Activated CD4-positive, alpha-beta memory T cell treated with anti-CD3 and anti-CD28 coated beads for 36 hours (primary cell): ENCODE measurements at regions of chr3 and their contacts with region 1.

Region 1: GRCh38 chr3:122679085-122679881 is 1.4 kb upstream of the PARP14 start:
- DNase-seq: peak; percentile 90
- H3K4me3 Mint-ChIP-seq: peak overlapping the region; percentile 99
- H3K27ac Mint-ChIP-seq: peak overlapping the region; percentile 96
- H3K4me1 Mint-ChIP-seq: peaks cover 51% of the 10 kb centered on the region
- H3K27me3 Mint-ChIP-seq: no peaks in the 10 kb centered on the region

Region 2: DNA sequence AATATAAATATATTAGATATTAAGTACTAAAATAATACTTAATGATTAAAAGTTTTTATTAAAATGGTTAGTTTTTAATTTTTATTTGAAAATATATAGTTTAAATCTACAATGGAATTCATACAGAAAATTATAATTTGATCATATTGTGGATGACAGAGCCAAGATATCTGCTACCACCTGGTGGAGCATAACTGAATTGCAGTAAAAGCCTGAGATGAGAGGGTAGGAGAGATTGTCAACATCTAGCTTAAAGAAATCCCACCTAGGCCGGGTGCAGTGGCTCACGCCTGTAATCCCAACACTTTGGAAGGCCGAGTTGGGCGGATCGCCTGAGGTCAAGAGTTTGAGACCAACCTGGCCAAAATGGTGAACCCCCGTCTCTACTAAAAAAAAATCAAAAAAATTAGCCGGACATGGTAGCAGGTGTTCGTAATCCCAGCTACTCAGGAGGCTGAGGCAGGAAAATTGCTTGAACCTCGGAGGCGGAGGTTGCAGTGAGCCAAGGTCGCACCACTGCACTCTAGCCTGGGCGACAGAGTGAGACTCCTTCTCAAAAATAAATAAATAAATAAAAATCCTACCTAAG is 379.3 kb before region 1 on chr3:
- CTCF ChIA-PET with region 1: no interaction called
- POLR2A ChIA-PET with region 1: no interaction called
- intact Hi-C with region 1: loop called (anchors 5 kb)
- DNase-seq: no peak
- H3K4me3 Mint-ChIP-seq: no peak overlapping the region
- H3K27ac Mint-ChIP-seq: no peak overlapping the region
- H3K4me1 Mint-ChIP-seq: peaks cover 18% of the 10 kb centered on the region
- H3K27me3 Mint-ChIP-seq: no peaks in the 10 kb centered on the region

Region 3: DNA sequence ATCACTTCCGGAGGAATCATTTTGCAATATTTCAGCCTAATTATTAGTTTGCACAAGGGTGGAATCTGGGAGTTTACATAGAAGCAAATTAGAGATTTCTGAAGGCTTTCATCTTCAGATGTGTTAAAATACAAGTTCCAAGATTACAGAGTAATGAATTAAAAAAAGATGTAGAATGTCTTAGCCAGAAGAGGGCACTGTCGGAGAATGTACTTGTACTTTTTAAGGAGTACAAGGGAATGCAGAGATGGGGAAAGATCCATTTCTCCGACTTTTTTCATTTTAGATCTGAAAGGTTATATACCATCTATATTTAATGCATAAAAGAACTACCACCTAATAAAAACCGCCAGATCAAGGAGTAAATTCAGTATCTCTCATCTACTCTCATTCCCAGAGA is 220.3 kb before region 1 on chr3:
- CTCF ChIA-PET with region 1: interaction called, 13 read pairs
- POLR2A ChIA-PET with region 1: no interaction called
- intact Hi-C with region 1: loop called (anchors 5 kb)
- DNase-seq: no peak
- H3K4me3 Mint-ChIP-seq: no peak overlapping the region
- H3K27ac Mint-ChIP-seq: no peak overlapping the region
- H3K4me1 Mint-ChIP-seq: peaks cover 6% of the 10 kb centered on the region
- H3K27me3 Mint-ChIP-seq: no peaks in the 10 kb centered on the region

Region 4: DNA sequence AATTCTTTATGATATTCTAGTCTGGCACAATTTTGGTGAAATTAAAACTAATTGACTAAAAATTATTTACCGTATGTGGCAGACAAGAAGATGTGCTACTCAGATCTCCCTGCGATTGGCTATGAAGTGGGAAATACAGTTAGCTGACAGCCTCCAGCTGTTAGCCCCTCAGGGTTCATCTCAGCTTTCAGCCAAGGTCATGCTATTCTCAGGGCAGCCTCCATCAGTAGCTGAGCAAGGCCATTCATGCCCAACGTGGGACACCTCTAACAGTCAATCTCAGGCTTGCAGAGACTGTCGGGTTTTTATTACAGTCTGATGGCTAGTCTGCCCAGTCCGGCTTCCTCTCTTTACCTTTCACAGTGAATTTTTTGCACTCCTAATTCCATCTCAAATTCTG is 121.9 kb before region 1 on chr3:
- CTCF ChIA-PET with region 1: interaction called, 230 read pairs
- POLR2A ChIA-PET with region 1: interaction called, 15 read pairs
- intact Hi-C with region 1: loop called (anchors 1 kb)
- DNase-seq: no peak
- H3K4me3 Mint-ChIP-seq: no peak overlapping the region
- H3K27ac Mint-ChIP-seq: no peak overlapping the region
- H3K4me1 Mint-ChIP-seq: peaks cover 21% of the 10 kb centered on the region
- H3K27me3 Mint-ChIP-seq: no peaks in the 10 kb centered on the region

Region 5: DNA sequence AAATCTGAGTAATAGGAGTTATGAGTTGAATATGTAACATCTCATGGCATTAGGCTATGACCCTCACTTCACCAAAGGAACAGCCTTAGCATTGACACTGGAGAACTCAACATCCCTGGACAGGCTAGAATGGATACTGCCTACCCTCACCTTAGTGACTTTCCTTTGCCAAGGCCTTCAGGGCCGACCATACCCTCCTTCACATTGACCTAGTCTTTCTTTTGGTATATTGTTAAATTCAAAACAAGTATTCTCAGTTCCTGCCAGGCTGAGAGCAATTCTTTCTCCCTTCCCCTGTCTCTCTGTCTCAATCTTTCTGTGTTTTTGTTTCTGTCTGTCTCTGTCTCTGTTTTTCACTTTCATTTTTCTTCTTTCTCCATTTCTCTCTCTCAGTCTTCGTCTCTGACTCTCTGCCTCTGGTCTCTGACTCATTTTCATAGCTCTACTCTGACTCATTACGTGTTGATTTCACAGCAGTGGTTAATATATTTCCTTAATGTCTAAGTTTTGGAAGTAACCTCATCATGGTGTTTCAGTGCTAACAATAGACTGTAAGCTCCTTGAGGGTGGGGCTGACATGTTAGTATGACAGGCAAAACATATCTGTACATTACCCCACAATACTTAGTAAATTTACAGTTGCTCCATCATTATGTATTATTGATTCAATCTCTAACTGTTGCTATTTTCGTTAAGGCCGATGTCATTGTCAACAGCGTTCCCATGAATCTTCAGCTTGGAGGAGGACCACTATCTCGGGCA is 69.3 kb before region 1 on chr3:
- CTCF ChIA-PET with region 1: interaction called, 5 read pairs
- POLR2A ChIA-PET with region 1: no interaction called
- intact Hi-C with region 1: loop called (anchors 1 kb)
- DNase-seq: peak; percentile 37
- H3K4me3 Mint-ChIP-seq: peak overlapping the region; percentile 17
- H3K27ac Mint-ChIP-seq: peak overlapping the region; percentile 87
- H3K4me1 Mint-ChIP-seq: peaks cover 21% of the 10 kb centered on the region
- H3K27me3 Mint-ChIP-seq: no peaks in the 10 kb centered on the region

Region 6: DNA sequence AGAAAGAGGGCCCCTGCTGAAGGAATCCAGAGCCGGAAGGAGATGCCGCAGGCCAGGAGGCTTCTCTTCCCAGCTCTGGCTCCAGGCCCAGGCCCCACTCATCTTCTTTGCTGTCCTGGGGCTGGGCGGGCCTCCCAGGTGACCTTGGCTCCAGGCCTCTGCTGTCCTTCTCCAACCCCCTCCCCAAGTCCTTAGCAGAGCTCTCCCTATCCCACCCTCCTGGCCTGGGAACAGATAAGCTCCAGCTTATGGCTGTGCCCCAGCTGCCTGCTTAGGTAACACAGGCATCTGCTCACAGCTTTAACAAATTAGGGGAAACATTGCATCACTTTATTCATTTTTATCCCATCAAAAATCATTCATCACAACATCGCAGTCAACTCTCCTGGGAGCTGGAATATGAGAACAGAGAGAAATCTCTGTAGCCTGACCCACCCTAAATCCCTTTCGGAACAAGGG is 261.4 kb after region 1 on chr3:
- CTCF ChIA-PET with region 1: no interaction called
- POLR2A ChIA-PET with region 1: no interaction called
- intact Hi-C with region 1: no loop called
- DNase-seq: no peak
- H3K4me3 Mint-ChIP-seq: no peak overlapping the region
- H3K27ac Mint-ChIP-seq: no peak overlapping the region
- H3K4me1 Mint-ChIP-seq: peaks cover 5% of the 10 kb centered on the region
- H3K27me3 Mint-ChIP-seq: no peaks in the 10 kb centered on the region